Endothelial cell of umbilical vein (primary cell): ENCODE measurements at regions of chr6 and their contacts with region 1.

Region 1: GRCh38 chr6:13814176-13814937 is at the start of gene MCUR1:
- DNase-seq: peak; percentile 84
- H3K4me3 ChIP-seq: peak within 1 kb of the TSS; percentile 70 to 94 (median 84)
- H3K27ac ChIP-seq: peak within 1 kb of the TSS; percentile 70
- H3K4me1 ChIP-seq: peaks cover 10% of the 10 kb centered on the region
- H3K27me3 ChIP-seq: no peaks in the 10 kb centered on the region
- CTCF ChIP-seq: peak in 1 of 2 donors; percentile 16
- POLR2A ChIP-seq: peak; percentile 75
- total RNA-seq, gene MCUR1: 18.5 and 21.2 TPM in 2 replicates

Region 2: DNA sequence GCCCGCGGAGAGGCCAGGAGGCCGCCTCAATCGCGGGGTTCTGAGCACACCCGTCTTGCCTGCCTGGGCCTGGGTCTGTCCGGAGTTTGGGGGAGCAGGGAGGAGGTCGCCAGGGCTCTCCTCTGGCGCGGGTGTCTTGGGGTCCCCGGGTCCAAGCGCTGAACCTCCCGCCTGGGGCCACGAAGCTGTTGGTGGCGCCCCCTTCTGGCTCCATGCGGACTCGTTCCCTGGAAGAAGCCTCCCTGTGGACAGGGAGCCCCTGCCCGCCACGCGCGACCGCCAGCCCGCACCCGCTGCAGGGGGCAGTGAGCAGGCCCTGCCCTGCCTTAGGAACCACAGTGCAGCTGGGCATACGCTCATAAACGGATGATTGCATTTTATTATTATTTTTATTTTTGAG is 44.7 kb before region 1 on chr6:
- CTCF ChIA-PET with region 1: no interaction called
- POLR2A ChIA-PET with region 1: no interaction called
- dilution Hi-C with region 1: no loop called
- intact Hi-C with region 1: no loop called
- DNase-seq: no peak
- H3K4me3 ChIP-seq: no peak overlapping the region
- H3K27ac ChIP-seq: no peak overlapping the region
- H3K4me1 ChIP-seq: no peaks in the 10 kb centered on the region
- H3K27me3 ChIP-seq: no peaks in the 10 kb centered on the region
- CTCF ChIP-seq: peak; percentile 11 to 34
- POLR2A ChIP-seq: no peak

Region 3: DNA sequence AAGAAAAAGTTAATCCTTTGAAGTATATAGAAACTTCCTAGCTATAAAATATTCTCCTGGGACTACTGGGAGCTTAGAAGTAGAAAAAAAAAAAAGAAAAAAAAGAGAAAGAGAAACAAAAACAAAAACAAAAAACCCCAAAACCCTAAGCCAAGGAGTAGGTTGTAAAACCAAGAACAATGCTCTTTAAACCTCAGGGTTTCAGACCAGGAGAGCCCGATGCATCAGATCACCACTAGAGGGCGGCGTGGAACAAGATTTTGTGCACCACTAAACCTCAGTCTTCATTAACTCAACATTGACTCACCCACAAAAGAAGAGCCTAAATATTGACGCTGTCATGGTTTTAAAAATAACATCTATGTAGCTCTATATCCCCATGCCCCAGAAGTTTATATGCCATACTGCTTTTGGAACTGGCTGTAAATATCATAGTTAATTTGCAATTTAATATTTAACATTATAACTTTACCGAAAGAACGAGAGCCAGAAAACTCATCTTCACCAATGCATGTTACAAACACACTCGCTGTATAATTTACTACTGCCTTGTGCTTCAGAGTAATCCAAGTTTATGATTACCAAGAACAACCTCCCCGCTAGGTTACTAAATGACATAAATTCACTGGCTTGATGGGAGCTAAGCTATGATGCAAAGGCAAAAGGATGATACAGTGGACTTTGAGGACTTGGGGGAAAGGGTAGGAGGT is 19.2 kb before region 1 on chr6:
- CTCF ChIA-PET with region 1: interaction called, 4 read pairs
- POLR2A ChIA-PET with region 1: no interaction called
- dilution Hi-C with region 1: no loop called
- intact Hi-C with region 1: loop called (anchors 1 kb)
- DNase-seq: peak; percentile 75
- H3K4me3 ChIP-seq: no peak overlapping the region
- H3K27ac ChIP-seq: peak overlapping the region; percentile 38
- H3K4me1 ChIP-seq: peaks cover 10% of the 10 kb centered on the region
- H3K27me3 ChIP-seq: no peaks in the 10 kb centered on the region
- CTCF ChIP-seq: peak; percentile 89 to 96
- POLR2A ChIP-seq: no peak

Region 4: GRCh38 chr6:13924146-13924948 is 110.0 kb after region 1 on chr6:
- CTCF ChIA-PET with region 1: no interaction called
- POLR2A ChIA-PET with region 1: no interaction called
- dilution Hi-C with region 1: no loop called
- intact Hi-C with region 1: loop called (anchors 5 kb)
- DNase-seq: peak; percentile 37
- H3K4me3 ChIP-seq: peak overlapping the region; percentile 43 to 55 (median 53)
- H3K27ac ChIP-seq: no peak overlapping the region
- H3K4me1 ChIP-seq: peaks cover 17% of the 10 kb centered on the region
- H3K27me3 ChIP-seq: peaks cover 29 to 52% of the 10 kb centered on the region in 2 experiments
- CTCF ChIP-seq: no peak
- POLR2A ChIP-seq: no peak

Region 5: DNA sequence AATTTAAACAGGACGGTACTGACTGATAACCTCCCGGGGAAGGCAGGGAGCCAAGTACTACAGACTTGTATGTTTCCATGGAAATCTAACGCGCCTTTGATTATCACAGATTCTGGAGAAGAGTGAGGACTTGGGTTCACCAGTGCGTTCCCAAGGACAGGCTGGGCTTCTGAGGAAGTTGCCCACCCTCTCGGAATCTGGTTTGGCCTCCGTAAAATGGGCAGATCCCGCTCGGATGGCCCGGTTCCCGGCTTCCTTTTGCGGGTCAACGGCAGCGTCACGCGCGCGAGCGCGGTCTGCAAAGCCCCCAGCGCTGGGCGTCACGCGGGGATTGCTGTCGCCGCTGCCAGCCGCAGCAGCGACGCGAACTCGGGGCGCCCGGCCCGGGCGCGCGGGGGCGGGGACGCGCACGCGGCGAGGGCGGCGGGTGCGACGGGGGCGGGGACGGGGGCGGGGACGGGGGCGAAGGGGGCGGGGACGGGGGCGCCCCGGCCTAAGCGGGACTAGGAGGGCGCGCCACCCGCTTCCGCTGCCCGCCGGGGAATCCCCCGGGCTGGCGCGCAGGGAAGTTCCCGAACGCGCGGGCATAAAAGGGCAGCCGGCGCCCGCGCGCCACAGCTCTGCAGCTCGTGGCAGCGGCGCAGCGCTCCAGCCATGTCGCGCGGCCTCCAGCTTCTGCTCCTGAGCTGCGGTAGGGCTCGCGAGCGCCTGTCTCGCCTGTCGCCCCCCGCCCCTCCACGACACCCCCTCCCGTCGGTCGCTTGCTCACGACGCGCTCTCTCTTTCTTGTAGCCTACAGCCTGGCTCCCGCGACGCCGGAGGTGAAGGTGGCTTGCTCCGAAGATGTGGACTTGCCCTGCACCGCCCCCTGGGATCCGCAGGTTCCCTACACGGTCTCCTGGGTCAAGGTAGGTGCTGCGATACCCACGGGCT is 303.1 kb after region 1 on chr6 and contains the start of gene CD83:
- CTCF ChIA-PET with region 1: no interaction called
- POLR2A ChIA-PET with region 1: no interaction called
- dilution Hi-C with region 1: no loop called
- intact Hi-C with region 1: loop called (anchors 5 kb)
- DNase-seq: peak; percentile 51
- H3K4me3 ChIP-seq: peak within 1 kb of the TSS; percentile 22 to 54 (median 51)
- H3K27ac ChIP-seq: no peak within 1 kb of the TSS
- H3K4me1 ChIP-seq: peaks cover 5% of the 10 kb centered on the region
- H3K27me3 ChIP-seq: peaks cover 0 to 3% of the 10 kb centered on the region in 2 experiments
- CTCF ChIP-seq: no peak
- POLR2A ChIP-seq: no peak
- total RNA-seq, gene CD83: 0.46 and 0.55 TPM in 2 replicates